ENCODE measurements at regions of chr17 and their contacts with region 1.

Region 1: DNA sequence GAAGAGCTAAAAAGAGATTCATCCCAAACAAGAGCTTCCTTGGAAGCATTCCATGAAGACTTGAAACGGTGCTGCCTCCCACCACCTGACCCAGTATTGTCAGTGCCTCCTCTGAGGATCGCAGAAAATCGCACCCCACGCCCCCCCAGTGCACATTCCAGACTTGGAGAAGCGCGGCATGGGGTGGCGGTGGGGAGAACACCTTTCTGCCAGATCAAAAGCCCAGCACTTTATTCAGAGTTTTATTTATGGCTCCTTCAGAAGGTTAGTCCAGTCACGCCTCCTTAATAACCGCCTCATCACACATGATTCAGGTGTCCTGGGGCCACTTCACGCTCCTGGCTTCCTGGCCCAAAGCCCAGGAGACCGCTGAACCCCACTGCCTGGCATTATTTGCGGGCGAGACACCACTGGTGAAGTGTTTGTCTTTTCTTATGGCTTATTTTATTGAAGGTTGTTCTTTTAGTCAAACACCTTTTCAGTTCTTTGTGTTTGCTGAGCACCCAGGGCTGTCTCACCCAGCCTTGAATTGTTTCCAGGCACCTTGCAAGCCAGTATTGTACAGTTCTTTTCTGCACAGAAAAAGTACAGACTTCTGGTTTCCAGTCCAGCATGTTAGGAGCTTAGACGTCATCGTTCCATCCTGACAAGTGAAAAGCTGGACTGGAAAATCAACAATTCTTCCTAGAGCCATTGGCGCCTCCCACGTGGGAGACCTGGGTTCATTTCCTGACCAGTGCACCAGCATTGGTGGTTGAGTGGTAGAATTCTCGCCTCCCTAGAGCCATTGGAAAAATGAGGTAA is 79.6 kb upstream of the CACNG5 start:
- DNase-seq: no peak
- H3K4me3 Mint-ChIP-seq: no peak overlapping the region
- H3K27ac Mint-ChIP-seq: no peak overlapping the region
- H3K4me1 Mint-ChIP-seq: no peaks in the 10 kb centered on the region
- H3K27me3 Mint-ChIP-seq: no peaks in the 10 kb centered on the region
- CTCF ChIP-seq: no peak

Region 2: DNA sequence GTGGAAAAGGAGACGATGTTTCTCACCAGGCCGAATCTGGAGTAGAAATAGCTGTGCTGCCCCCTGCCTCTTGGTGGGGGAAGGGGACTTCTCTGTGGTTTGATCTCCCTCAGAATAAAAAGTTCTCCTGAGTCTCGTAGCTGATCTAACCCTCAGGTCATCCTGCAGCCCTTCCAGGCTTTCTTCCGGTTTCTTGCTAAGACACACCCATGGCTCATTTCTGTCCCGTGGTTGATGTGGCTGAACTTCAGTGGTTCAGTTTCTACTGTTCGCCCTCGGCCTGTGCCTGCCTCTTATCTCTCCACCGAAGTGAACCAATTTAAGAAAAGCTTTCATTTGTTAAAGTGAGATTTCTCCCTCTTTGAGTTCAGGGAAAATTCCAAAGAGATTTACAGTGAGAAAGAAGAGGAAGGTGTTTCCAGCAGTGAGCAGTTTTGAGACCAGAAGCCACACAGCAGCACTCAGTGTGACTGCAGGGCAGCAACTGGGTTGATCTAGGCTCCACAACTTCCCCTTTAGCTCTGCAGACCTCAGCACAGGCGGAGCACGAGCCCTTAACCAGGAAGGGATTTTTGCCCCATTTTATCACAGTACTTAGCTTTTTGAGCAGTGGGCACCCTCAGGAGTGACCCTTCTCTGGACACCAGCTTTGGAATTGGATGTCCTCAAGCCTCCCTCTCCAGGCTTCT is 44.7 kb after region 1 on chr17:
- CTCF ChIA-PET with region 1: interaction called, 13 read pairs
- intact Hi-C with region 1: no loop called
- DNase-seq: no peak
- H3K4me3 Mint-ChIP-seq: no peak overlapping the region
- H3K27ac Mint-ChIP-seq: no peak overlapping the region
- H3K4me1 Mint-ChIP-seq: no peaks in the 10 kb centered on the region
- H3K27me3 Mint-ChIP-seq: no peaks in the 10 kb centered on the region
- CTCF ChIP-seq: no peak